Left cardiac atrium (tissue), 4 donors: ENCODE measurements at regions of chr11 and their contacts with region 1.

Region 1: GRCh38 chr11:8033305-8034105 is 46.4 kb downstream of the EIF3F start:
- DNase-seq: peak; percentile 87
- ATAC-seq: peak; percentile 77 to 80

Region 2: DNA sequence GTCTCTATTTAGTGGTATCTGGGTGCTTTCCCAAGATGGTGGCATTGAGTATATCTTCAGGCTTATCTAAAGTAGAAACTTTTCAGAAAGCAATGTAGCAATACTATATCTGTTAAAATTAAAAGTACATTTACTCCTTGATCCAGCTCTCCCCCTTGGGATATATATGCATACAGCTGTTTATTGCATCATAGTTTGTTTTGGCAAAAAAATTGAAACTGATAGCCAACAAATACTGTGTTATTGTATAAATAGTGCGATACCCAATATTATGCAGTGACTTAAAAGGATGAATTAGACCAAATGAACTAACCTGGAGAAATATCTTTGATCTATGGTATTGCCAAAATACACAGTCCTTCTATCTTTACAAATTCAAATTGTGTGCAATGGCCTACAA is 83.6 kb before region 1 on chr11:
- intact Hi-C with region 1: no loop called
- DNase-seq: no peak
- ATAC-seq: no peak

Region 3: GRCh38 chr11:7977232-7977917 is 56.1 kb before region 1 on chr11:
- intact Hi-C with region 1: no loop called
- DNase-seq: no peak
- ATAC-seq: no peak

Region 4: GRCh38 chr11:8068605-8069221 is 35.2 kb after region 1 on chr11:
- intact Hi-C with region 1: loop called in 1 of 2 experiments (anchors 2 kb)
- DNase-seq: peak; percentile 61
- ATAC-seq: peak; percentile 75 to 81

Region 5: DNA sequence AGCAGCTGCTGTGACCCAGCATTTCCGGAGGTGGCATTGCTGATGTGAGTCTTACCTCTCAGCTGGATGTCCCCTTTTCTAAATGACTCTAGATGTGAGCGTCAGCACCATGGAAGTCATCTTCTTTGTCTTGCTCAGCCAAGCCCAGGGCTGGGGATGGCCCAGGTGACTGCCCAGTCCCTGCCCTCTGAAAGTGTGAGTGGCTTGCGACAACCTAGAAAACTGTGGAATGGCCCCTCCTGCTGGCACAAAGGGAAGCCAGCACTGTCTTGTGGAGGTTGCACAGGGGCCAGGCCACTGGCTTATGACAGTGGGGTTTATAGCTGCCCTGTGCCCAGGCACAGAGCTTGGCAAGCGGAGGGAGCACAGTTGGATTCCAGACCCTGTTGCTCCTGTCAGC is 53.7 kb after region 1 on chr11:
- intact Hi-C with region 1: loop called (anchors 2 to 5 kb)
- DNase-seq: peak; percentile 16
- ATAC-seq: no peak

Region 6: GRCh38 chr11:8092587-8093424 is 59.3 kb after region 1 on chr11:
- intact Hi-C with region 1: loop called (anchors 2 to 5 kb)
- DNase-seq: peak; percentile 82
- ATAC-seq: peak; percentile 71 to 78

Region 7: DNA sequence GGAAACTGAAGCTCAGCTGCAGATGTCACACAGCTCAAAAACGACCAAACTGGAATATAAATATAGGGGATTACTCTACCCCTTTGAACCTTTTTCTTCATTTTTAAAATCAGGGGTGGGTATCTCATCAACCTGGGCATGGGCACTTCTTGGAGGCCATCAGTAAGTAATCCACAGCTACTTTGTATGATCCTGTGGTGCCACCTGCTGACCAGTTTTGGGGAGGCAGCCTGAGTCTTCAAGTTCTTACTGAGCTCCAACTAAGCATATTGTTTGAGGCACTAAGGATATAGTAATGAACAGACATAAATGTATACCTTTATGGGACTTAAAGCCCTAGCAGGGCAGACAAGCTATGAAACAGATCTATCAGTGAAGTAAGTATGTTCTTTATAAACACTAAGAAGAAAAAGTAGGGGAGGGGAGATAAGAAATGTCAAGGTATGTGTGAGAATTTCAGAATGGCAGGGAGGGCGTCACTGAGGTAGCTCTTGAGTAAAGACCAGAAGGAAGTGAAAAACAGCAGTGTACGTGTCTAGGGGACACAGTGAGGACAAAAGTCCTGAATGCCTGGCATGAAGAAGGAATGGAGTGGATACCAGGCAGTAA is 65.9 kb after region 1 on chr11:
- intact Hi-C with region 1: loop called in 1 of 2 experiments (anchors 5 kb)
- DNase-seq: peak; percentile 70
- ATAC-seq: peak; percentile 54 to 70